ENCODE measurements at regions of chr12 and their contacts with region 1.

Region 1: DNA sequence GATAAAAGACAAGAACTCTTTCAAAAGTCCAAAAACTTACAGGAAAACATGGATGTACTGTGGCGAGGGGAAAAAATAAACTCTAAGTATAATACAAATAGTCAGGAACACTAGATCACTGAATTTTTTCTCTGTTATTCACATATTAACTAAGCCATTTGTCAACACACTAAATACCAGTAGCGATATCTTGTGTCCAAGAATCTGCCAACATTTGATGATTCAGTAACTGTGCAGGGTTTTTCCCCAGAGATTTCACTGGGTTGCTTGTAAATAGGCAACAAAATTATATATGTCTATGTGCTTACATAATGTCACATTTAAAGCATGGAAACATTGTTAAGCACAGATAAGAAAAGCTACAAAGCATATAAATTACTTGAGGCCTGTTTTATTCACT is 205.9 kb downstream of the KIF21A start:
- DNase-seq: no peak
- H3K4me3 ChIP-seq: no peak overlapping the region
- H3K27ac ChIP-seq: no peak overlapping the region
- H3K4me1 ChIP-seq: no peaks in the 10 kb centered on the region
- H3K27me3 ChIP-seq: no peaks in the 10 kb centered on the region
- CTCF ChIP-seq: no peak

Region 2: DNA sequence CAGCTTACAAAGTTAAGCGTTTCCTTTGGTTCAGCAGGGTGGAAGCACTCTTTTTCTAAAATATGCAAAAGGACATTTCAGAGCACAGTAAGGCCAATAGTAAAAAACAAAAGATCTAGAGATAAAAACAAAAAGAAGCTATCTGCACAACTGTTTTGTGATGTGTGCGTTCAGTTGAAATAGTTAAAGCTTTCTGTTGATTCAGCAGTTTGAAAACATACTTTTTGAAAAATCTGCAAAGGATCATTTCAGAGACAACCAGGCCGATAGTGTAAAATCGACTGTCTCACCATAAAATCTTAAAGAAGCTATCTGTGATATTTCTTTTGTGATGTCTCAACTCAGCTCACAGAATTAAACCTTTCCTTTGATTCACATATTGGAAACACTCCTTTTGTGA is 1220.4 kb before region 1 on chr12:
- CTCF ChIA-PET with region 1: no interaction called
- POLR2A ChIA-PET with region 1: no interaction called
- intact Hi-C with region 1: loop called (anchors 5 kb)
- DNase-seq: no peak
- H3K4me3 ChIP-seq: no peak overlapping the region
- H3K27ac ChIP-seq: no peak overlapping the region
- H3K4me1 ChIP-seq: no peaks in the 10 kb centered on the region
- H3K27me3 ChIP-seq: no peaks in the 10 kb centered on the region
- CTCF ChIP-seq: no peak

Measured in PC-9 (cell line).